ENCODE measurements at regions of chr20 and their contacts with region 1.

Region 1: GRCh38 chr20:49936153-49937027 is at the start of gene RNF114:
- H3K4me3 ChIP-seq: peak within 1 kb of the TSS; percentile 96
- H3K27ac ChIP-seq: peak within 1 kb of the TSS; percentile 74
- H3K4me1 ChIP-seq: peaks cover 6% of the 10 kb centered on the region
- CTCF ChIP-seq: peak; percentile 30; the same call in 1 of the 2 replicates

Region 2: GRCh38 chr20:49915378-49916145 is 20.8 kb before region 1 on chr20 and contains the start of gene SPATA2:
- CTCF ChIA-PET with region 1: interaction called, 6 read pairs
- POLR2A ChIA-PET with region 1: interaction called, 11 read pairs
- H3K4me3 ChIP-seq: peak within 1 kb of the TSS; percentile 99
- H3K27ac ChIP-seq: peak within 1 kb of the TSS; percentile 99
- H3K4me1 ChIP-seq: no peaks in the 10 kb centered on the region
- CTCF ChIP-seq: no peak

Region 3: DNA sequence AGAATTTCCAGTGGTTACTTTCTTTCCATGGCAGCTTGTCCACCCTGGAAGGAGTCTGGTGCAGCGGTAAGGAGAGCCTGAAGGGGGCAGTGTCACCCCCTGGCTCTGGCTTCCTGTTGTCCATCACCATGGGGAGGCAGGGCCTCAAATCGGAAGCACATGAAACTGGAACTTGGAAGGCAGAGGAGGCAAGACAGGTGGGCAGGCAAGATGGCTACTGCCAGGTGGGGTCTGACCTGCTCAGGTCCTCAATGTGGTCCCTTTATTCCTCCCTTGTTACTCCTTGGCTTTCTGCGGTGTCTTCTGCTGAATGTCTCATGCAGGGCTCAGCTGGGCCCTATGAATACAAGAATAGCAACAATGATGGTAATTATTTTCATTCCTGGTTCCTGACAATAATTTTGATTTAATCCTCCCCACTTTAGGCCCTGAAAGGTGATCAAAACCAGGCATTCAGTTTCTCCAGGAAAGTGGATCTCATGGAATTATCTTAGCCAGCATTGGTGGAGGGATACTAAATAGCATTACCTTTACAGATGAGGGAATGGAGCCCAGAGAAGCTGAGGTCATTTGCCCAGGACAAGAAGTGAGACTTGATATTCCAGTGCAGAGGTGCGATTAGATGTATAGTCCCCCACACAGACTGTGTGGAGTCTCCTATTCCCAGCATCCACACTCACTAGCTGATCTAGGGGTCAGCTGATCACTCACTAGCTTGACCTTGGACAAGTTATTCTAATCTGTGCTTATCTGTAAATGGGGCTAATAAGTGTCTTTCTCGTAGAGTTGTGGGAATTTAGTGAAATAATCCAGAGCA is 28.8 kb after region 1 on chr20:
- CTCF ChIA-PET with region 1: interaction called, 15 read pairs
- POLR2A ChIA-PET with region 1: no interaction called
- H3K4me3 ChIP-seq: no peak overlapping the region
- H3K27ac ChIP-seq: no peak overlapping the region
- H3K4me1 ChIP-seq: no peaks in the 10 kb centered on the region
- CTCF ChIP-seq: peak; percentile 66